CD8-positive, alpha-beta T cell (primary cell): ENCODE measurements at regions of chr2 and their contacts with region 1.

Region 1: GRCh38 chr2:130797493-130798435 is 39.0 kb upstream of the ARHGEF4 start:
- DNase-seq: peak; percentile 77 to 96 (median 92)
- ATAC-seq: peak; percentile 89
- H3K4me3 ChIP-seq: peak overlapping the region; percentile 69 to 96
- H3K4me3 Mint-ChIP-seq: peak overlapping the region; percentile 75
- H3K27ac ChIP-seq: peak overlapping the region; percentile 64 to 88
- H3K27ac Mint-ChIP-seq: peak overlapping the region; percentile 64
- H3K4me1 ChIP-seq: peaks cover 10% of the 10 kb centered on the region
- H3K4me1 Mint-ChIP-seq: peaks cover 6% of the 10 kb centered on the region
- H3K27me3 ChIP-seq: no peaks in the 10 kb centered on the region
- H3K27me3 Mint-ChIP-seq: peaks cover 2% of the 10 kb centered on the region
- CTCF ChIP-seq: peak; percentile 67

Region 2: DNA sequence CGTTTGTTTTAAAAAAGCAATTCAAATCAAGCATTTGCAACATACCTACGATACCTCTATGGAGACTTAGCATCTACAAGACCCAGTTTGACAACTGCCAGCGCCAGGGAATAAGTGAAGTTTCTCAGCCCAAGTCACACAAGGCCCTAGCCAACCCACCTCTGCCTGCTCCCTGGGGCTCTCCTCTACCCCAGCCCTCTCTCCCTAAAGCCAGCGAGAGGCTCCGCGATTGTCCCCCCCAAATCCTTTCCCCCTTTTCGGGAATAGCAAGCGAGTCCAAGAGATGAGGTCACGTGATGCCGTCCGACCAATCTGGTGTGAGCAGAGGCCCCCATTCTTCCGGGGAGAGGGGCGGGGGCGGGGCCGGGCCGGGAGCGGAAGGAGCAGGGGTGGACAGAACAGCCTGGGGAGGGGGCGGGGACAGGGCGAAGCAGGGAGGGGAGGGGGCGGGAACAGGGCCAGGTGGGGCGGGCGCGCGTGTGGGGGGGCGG is 920.4 kb before region 1 on chr2:
- CTCF ChIA-PET with region 1: no interaction called
- POLR2A ChIA-PET with region 1: no interaction called
- intact Hi-C with region 1: loop called in 1 of 2 experiments (anchors 5 kb)
- DNase-seq: peak; percentile 62 to 93 (median 85)
- ATAC-seq: peak; percentile 95
- H3K4me3 ChIP-seq: peak overlapping the region; percentile 70 to 87
- H3K4me3 Mint-ChIP-seq: peak overlapping the region; percentile 98
- H3K27ac ChIP-seq: peak overlapping the region; percentile 49 to 58
- H3K27ac Mint-ChIP-seq: peak overlapping the region; percentile 95
- H3K4me1 ChIP-seq: peaks cover 11% of the 10 kb centered on the region
- H3K4me1 Mint-ChIP-seq: peaks cover 16% of the 10 kb centered on the region
- H3K27me3 ChIP-seq: no peaks in the 10 kb centered on the region
- H3K27me3 Mint-ChIP-seq: no peaks in the 10 kb centered on the region
- CTCF ChIP-seq: no peak

Region 3: DNA sequence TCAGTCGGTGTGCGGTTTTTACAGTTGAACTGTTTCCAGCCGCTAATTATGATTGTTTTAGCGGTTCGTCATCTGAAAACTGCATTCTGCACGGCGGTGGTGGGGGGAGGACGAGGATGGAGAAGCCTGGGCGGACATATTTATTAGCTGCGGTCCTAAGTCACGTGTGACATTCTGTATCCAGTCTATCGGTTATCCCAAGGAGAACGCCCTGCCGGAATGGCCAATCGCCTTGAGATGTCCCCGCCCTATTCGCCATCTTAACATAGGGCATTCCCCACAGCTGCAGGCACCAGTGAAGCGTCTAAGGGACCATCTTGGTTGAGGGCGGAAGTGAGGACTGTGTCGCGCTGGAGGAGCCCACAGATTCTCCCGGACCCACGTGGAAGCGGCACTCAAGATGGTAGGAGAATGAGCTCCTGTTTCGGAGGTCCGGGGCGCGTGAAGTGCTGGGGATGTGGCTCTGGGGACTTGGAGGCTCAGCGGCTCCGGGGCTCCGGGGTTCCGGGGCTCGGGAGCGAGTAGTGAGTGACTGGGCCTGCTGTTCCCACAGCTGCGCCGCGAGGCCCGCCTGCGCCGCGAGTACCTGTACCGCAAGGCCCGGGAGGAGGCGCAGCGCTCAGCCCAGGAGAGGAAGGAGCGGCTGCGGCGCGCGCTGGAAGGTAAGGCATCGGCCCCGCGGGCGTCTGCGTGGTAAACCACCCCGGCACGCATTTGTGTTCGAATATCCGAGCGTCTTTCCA is 455.1 kb before region 1 on chr2 and contains the start of gene IMP4:
- CTCF ChIA-PET with region 1: no interaction called
- POLR2A ChIA-PET with region 1: no interaction called
- intact Hi-C with region 1: loop called (anchors 5 to 10 kb)
- DNase-seq: peak; percentile 89 to 100 (median 93)
- ATAC-seq: peak; percentile 84
- H3K4me3 ChIP-seq: peak within 1 kb of the TSS; percentile 90 to 98
- H3K4me3 Mint-ChIP-seq: peak within 1 kb of the TSS; percentile 100
- H3K27ac ChIP-seq: peak within 1 kb of the TSS; percentile 94 to 97
- H3K27ac Mint-ChIP-seq: peak within 1 kb of the TSS; percentile 100
- H3K4me1 ChIP-seq: peaks cover 21% of the 10 kb centered on the region
- H3K4me1 Mint-ChIP-seq: peaks cover 35% of the 10 kb centered on the region
- H3K27me3 ChIP-seq: no peaks in the 10 kb centered on the region
- H3K27me3 Mint-ChIP-seq: no peaks in the 10 kb centered on the region
- CTCF ChIP-seq: no peak
- total RNA-seq, gene IMP4: 108 to 120 TPM

Region 4: GRCh38 chr2:130813722-130814121 is 16.0 kb after region 1 on chr2:
- CTCF ChIA-PET with region 1: interaction called, 14 read pairs
- POLR2A ChIA-PET with region 1: no interaction called
- intact Hi-C with region 1: no loop called
- DNase-seq: no peak
- ATAC-seq: no peak
- H3K4me3 ChIP-seq: no peak overlapping the region
- H3K4me3 Mint-ChIP-seq: no peak overlapping the region
- H3K27ac ChIP-seq: no peak overlapping the region
- H3K27ac Mint-ChIP-seq: no peak overlapping the region
- H3K4me1 ChIP-seq: no peaks in the 10 kb centered on the region
- H3K4me1 Mint-ChIP-seq: no peaks in the 10 kb centered on the region
- H3K27me3 ChIP-seq: no peaks in the 10 kb centered on the region
- H3K27me3 Mint-ChIP-seq: peaks cover 5% of the 10 kb centered on the region
- CTCF ChIP-seq: no peak

Region 5: GRCh38 chr2:130920415-130921163 is 122.8 kb after region 1 on chr2:
- CTCF ChIA-PET with region 1: interaction called, 22 read pairs
- POLR2A ChIA-PET with region 1: no interaction called
- intact Hi-C with region 1: loop called in 1 of 2 experiments (anchors 1 kb)
- DNase-seq: peak in 8 of 9 experiments; percentile 32 to 70 (median 56)
- ATAC-seq: peak; percentile 26
- H3K4me3 ChIP-seq: no peak overlapping the region
- H3K4me3 Mint-ChIP-seq: no peak overlapping the region
- H3K27ac ChIP-seq: no peak overlapping the region
- H3K27ac Mint-ChIP-seq: no peak overlapping the region
- H3K4me1 ChIP-seq: no peaks in the 10 kb centered on the region
- H3K4me1 Mint-ChIP-seq: no peaks in the 10 kb centered on the region
- H3K27me3 ChIP-seq: peaks cover 0 to 3% of the 10 kb centered on the region in 2 experiments
- H3K27me3 Mint-ChIP-seq: peaks cover 4% of the 10 kb centered on the region
- CTCF ChIP-seq: peak; percentile 62

Region 6: DNA sequence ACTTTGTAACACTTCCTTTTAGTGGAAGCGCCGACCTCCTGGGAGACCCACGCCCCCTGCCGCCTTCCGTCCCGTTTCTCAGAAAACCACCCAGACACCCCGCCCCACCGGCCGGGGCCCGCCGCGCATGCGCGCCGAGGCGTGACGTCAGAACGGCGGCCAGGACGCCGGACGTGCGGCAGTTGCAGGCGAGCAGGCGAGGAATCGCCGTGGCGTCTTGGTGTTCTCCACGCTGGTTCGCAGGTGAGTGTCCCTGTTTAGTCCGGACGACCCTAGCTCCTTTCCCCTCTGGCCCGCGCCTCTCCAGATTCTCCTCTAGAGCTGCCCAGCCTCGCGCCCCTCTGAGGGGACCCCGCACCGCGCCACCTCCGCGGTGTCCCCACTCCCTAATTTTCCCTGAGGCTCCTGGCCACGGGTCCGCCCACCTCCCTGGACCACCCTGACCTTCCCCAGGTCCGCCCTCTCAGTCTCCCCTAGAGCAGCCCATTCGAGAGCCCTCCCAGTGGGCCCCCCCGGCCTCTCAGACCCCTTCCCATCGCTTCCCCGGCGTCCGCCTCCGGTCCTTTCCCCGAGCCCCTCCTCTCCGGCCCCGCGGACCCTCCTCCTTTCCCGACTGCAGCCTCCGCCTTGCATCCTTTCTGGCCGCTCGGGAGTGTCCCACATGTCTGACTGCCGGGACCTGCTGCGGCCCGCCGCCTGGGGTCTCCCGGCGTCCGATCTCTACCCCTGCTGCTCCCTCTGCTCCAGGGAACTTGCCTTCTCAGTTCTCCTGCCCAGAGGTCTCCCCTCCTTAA is 307.6 kb after region 1 on chr2 and contains the start of gene PLEKHB2:
- CTCF ChIA-PET with region 1: interaction called, 3 read pairs
- POLR2A ChIA-PET with region 1: no interaction called
- intact Hi-C with region 1: loop called in 1 of 2 experiments (anchors 5 kb)
- DNase-seq: peak; percentile 86 to 97 (median 93)
- ATAC-seq: peak; percentile 61
- H3K4me3 ChIP-seq: peak within 1 kb of the TSS; percentile 83 to 95
- H3K4me3 Mint-ChIP-seq: peak within 1 kb of the TSS; percentile 95
- H3K27ac ChIP-seq: peak within 1 kb of the TSS; percentile 91 to 95
- H3K27ac Mint-ChIP-seq: peak within 1 kb of the TSS; percentile 96
- H3K4me1 ChIP-seq: peaks cover 35% of the 10 kb centered on the region
- H3K4me1 Mint-ChIP-seq: peaks cover 58% of the 10 kb centered on the region
- H3K27me3 ChIP-seq: no peaks in the 10 kb centered on the region
- H3K27me3 Mint-ChIP-seq: no peaks in the 10 kb centered on the region
- CTCF ChIP-seq: no peak
- total RNA-seq, gene PLEKHB2: 89.8 to 90.1 TPM